GM13976 (cell line): ENCODE measurements at regions of chr17 and their contacts with region 1.

Region 1: GRCh38 chr17:70552230-70552981 is 383.1 kb downstream of the KCNJ2 start:
- DNase-seq: peak; percentile 56
- CTCF ChIP-seq: peak; percentile 11

Region 2: GRCh38 chr17:69574257-69575197 is 977.9 kb before region 1 on chr17:
- in situ Hi-C with region 1: loop called (anchors 25 kb)
- DNase-seq: no peak
- CTCF ChIP-seq: no peak

Region 3: GRCh38 chr17:70168977-70169708 is 383.3 kb before region 1 on chr17 and contains the start of gene KCNJ2:
- in situ Hi-C with region 1: loop called (anchors 25 kb)
- DNase-seq: peak; percentile 90
- CTCF ChIP-seq: no peak

Region 4: GRCh38 chr17:70661342-70662222 is 109.2 kb after region 1 on chr17:
- in situ Hi-C with region 1: no loop called
- DNase-seq: no peak
- CTCF ChIP-seq: no peak